PC-3 (cell line): ENCODE measurements at regions of chr3 and their contacts with region 1.

Region 1: DNA sequence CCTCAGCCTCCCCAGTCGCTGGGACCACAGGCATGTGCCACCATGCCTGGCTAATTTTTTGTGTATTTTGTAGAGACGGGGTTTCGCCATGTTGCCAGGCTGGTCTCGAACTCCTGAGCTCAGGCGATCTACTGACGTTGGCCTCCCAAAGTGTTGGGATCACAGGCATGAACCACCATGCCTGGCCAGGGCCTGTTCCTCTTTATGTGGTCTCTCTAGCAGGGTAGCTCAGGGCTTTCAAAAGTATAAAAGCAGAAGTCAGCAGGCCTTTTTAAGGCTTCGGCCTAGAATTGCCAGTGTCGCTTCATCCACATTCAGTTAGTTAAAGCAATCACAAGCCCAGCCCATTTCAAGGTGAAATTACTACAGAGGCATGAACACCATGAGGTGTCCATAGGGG is 7.6 kb downstream of the VHL start:
- DNase-seq: no peak
- ATAC-seq: no peak
- H3K4me3 ChIP-seq: no peak overlapping the region
- H3K27ac ChIP-seq: no peak overlapping the region
- H3K4me1 ChIP-seq: no peaks in the 10 kb centered on the region
- H3K27me3 ChIP-seq: no peaks in the 10 kb centered on the region
- CTCF ChIP-seq: no peak

Region 2: GRCh38 chr3:9828801-9829755 is 320.1 kb before region 1 on chr3:
- CTCF ChIA-PET with region 1: no interaction called
- POLR2A ChIA-PET with region 1: interaction called, 13 read pairs
- intact Hi-C with region 1: no loop called
- DNase-seq: no peak
- ATAC-seq: no peak
- H3K4me3 ChIP-seq: no peak overlapping the region
- H3K27ac ChIP-seq: no peak overlapping the region
- H3K4me1 ChIP-seq: no peaks in the 10 kb centered on the region
- H3K27me3 ChIP-seq: no peaks in the 10 kb centered on the region
- CTCF ChIP-seq: no peak

Region 3: DNA sequence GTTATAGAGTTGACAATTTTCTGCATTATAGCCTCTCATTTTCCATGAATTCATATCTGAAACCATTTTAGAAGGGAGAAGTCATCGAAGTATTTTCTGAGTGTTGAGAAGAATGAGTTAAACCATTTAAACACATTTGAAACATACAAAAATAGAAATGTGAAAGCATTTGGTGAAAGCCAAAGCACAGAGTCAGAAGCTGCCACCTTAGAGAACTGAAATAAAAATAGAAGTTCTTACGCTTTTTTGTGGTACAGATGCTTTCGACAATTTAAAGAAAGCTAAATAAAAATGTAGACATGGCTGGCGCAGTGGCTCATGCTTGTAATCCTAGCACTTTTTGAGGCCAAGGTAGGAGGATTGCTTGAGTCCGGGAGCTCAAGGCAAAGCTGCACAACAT is 50.2 kb before region 1 on chr3:
- CTCF ChIA-PET with region 1: no interaction called
- POLR2A ChIA-PET with region 1: no interaction called
- intact Hi-C with region 1: no loop called
- DNase-seq: no peak
- ATAC-seq: no peak
- H3K4me3 ChIP-seq: no peak overlapping the region
- H3K27ac ChIP-seq: no peak overlapping the region
- H3K4me1 ChIP-seq: no peaks in the 10 kb centered on the region
- H3K27me3 ChIP-seq: no peaks in the 10 kb centered on the region
- CTCF ChIP-seq: no peak